Activated CD4-positive, alpha-beta T cell treated with anti-CD3 and anti-CD28 coated beads, Interleukin-2, amount 10 ng/mL, durations not matched to agents 24 days and 14 days (primary cell): ENCODE measurements at regions of chr6 and their contacts with region 1.

Region 1: GRCh38 chr6:108157234-108157980 is 8.4 kb upstream of the NR2E1 start:
- DNase-seq: peak; percentile 56
- H3K4me3 Mint-ChIP-seq: no peak overlapping the region
- H3K27ac Mint-ChIP-seq: no peak overlapping the region
- H3K4me1 Mint-ChIP-seq: peaks cover 4% of the 10 kb centered on the region
- H3K27me3 Mint-ChIP-seq: peaks cover 85% of the 10 kb centered on the region

Region 2: GRCh38 chr6:108168501-108169463 is 11.4 kb after region 1 on chr6:
- intact Hi-C with region 1: loop called (anchors 1 kb)
- DNase-seq: peak; percentile 60
- H3K4me3 Mint-ChIP-seq: peak overlapping the region; percentile 7
- H3K27ac Mint-ChIP-seq: no peak overlapping the region
- H3K4me1 Mint-ChIP-seq: peaks cover 18% of the 10 kb centered on the region
- H3K27me3 Mint-ChIP-seq: peaks cover 87% of the 10 kb centered on the region